Posterior cingulate gyrus (tissue), 11 donors: ENCODE measurements at regions of chr16 and their contacts with region 1.

Region 1: DNA sequence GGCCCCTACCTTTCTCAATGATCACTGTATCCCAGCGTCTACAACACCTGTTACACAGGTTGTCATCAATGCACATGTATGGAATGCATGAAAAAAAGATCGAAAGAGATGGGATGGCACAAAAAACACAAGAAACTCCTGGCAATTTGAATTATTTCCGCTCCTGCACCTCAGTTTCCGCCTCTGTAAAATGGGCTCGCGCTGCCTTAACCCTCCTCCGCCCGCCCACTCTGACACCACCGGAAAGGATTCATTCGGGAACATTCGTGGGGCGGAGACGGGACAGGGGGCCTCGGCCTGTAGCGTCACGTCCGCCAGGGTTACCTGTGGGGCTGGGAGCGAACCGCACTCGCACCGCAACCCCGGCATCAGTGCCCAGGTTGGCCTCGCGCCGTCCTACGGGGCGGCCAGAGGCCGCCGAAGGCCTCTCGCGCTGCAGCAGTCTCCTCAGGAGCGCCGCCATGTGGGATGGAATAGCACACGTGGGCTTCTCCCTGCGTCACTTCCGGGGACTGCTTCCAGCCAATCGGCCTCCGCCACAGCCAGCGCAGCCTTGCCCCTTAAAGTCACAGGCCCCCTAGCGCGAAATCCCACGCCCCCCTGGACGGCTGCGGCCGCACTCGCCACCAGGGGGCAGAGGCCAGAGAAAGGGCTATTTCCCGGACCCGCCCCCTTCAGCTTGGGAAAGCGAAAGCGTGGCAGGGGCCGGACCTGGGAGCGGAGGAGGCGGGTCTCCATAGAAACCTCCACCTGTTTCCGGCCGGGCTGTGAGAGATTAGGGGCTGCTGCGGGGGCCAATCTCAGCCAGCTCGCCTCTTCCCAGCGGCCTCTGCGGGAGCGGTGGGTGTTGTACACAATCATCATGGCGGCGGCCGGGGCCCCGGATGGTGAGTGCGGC is at the starts of genes EARS2 and UBFD1:
- DNase-seq: peak; percentile 94 to 99 (median 96)

Region 2: GRCh38 chr16:23452572-23453337 is 104.4 kb before region 1 on chr16 and contains the start of gene COG7:
- intact Hi-C with region 1: loop called (anchors 1 kb)
- DNase-seq: peak; percentile 80 to 98 (median 90)

Region 3: GRCh38 chr16:23595951-23596720 is 39.0 kb after region 1 on chr16 and contains the start of gene NDUFAB1:
- intact Hi-C with region 1: loop called (anchors 2 kb)
- DNase-seq: peak; percentile 86 to 98 (median 91)

Region 4: DNA sequence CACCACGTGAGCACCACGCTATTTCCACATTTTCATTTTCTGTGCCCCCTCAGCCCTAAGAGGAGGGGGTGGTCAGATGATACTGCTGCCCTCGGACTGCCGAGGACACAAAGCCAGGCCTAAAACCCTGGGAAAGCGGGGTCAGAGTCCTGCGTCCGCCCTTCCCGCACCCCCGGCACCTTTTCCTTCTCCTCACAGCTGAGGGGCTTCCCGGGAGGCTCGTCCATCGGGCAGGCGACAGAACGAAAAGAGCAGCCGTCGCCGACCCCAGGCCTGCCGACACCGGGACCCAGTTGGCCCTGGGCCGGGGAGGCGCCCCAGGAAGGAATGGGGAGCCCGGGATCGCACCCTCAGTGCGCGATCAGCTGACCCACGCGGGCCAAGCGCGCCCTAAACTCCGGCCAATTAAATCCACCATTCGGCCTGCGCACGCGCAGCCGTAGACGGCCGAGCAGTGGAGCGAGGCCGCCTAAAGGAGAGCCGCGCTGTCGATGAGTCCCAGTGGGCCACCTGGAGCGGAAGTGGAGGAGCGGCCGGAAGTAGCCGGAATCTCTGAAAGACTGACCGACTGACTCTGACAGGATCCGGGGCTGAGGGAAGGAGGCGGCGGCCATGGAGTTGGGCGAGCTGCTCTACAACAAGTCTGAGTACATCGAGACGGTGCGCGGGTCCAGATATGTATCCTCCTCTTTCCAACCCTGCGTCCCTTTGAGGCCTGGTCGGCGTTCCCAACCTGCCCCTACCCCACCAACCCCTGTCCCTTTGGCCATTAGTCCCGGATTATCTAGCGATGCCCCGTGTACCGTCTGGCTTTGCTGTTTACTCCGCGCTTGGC is 84.0 kb after region 1 on chr16 and contains the starts of genes DCTN5 and PALB2:
- intact Hi-C with region 1: loop called (anchors 1 kb)
- DNase-seq: peak; percentile 89 to 99 (median 94)